CD4-positive, alpha-beta T cell (primary cell): ENCODE measurements at regions of chr5 and their contacts with region 1.

Region 1: DNA sequence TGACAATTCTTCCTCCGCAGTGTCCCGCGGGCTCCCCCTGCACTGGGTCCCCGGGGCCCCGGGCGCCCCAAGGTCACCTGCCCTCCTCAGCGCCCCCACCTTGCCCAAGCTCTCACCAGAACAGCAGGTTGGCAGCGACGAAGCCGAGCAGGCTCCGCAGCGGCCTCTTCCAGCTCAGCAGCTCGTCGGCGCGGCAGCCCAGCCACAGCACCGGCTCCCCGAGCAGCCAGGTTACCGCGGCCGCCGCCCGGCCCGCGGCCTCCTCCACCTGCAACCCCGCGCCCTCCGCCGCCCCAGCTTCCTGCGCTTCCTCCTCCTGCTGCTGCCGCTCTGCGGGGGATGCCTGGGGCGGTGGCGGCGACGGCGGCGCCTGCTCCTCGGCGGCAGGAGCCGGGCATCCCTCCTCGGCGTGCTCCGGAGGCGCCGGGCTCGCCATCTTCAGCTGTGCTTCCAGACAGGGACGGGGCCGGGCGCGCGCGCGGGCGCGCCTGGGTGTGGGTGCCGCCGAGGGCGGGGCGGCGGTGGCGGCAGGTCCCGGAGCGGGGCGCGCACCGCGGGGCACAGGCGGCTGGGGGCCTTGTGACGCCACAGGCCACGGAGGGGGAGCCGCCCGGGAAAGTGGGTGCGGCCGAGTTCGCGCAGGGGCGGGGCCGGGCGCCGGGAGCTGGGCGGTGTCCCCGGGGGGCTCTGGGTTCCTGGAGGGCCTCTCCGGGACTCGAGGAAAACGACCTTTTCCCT is at the start of gene RETREG1:
- DNase-seq: peak; percentile 70 to 94 (median 87)
- ATAC-seq: peak; percentile 70
- H3K4me3 ChIP-seq: peak within 1 kb of the TSS; percentile 93
- H3K4me3 Mint-ChIP-seq: peak within 1 kb of the TSS; percentile 99
- H3K27ac ChIP-seq: peak within 1 kb of the TSS; percentile 94 to 95
- H3K27ac Mint-ChIP-seq: no peak within 1 kb of the TSS
- H3K4me1 ChIP-seq: peaks cover 37% of the 10 kb centered on the region
- H3K4me1 Mint-ChIP-seq: peaks cover 53% of the 10 kb centered on the region
- H3K27me3 ChIP-seq: no peaks in the 10 kb centered on the region
- H3K27me3 Mint-ChIP-seq: no peaks in the 10 kb centered on the region
- CTCF ChIP-seq: no peak
- total RNA-seq, gene RETREG1: 68.9 to 69.7 TPM

Region 2: DNA sequence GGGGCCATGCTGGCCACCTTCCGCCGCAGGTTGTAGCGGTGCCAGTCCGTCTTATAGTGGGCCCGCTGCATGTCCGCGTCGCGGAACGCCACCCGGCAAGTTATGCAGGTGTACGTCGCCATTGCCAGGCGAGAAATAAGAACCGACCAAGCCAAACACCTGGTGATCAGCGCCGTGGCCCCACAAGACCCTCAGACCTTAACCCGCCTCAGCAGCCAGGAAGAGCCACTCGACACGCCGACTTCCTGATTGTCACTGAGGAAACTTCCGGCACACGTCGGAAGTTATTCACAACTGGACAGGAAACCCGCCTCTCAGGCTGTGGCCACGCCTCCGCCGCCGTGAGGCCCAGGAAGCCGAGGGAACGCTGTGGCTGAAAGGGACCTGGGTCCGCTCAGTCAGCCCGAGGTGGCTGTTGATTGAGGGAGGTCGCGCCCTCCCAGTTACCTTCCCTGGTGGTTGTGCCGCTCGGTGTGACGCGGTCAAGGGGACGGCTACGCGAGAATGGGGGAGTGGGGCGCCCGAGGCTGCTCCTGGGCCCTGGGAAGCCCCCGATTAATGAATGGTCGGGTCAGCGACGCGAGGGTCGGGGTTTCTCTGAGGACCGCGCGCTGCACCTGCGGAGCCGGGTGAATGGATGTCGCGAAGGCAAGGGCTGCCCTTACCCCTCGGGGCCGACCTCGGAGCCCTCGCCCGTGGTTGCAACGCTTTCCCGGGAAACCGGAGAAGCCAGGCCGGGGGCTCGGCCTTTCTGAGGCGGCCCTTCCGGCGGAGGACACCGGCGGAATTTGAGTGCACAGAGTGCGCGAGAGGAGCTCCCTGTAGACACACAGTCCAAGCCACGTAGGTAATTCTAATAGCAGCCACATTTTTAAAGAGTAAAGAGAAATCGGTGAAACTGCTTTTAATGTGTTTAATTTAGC is 150.9 kb before region 1 on chr5 and contains the start of gene ZNF622:
- CTCF ChIA-PET with region 1: no interaction called
- POLR2A ChIA-PET with region 1: interaction called, 4 read pairs
- intact Hi-C with region 1: loop called (anchors 5 kb)
- DNase-seq: peak; percentile 76 to 95 (median 85)
- ATAC-seq: peak; percentile 93
- H3K4me3 ChIP-seq: peak within 1 kb of the TSS; percentile 82
- H3K4me3 Mint-ChIP-seq: peak within 1 kb of the TSS; percentile 98
- H3K27ac ChIP-seq: peak within 1 kb of the TSS; percentile 63 to 79
- H3K27ac Mint-ChIP-seq: peak within 1 kb of the TSS; percentile 95
- H3K4me1 ChIP-seq: peaks cover 53% of the 10 kb centered on the region
- H3K4me1 Mint-ChIP-seq: peaks cover 96% of the 10 kb centered on the region
- H3K27me3 ChIP-seq: no peaks in the 10 kb centered on the region
- H3K27me3 Mint-ChIP-seq: no peaks in the 10 kb centered on the region
- CTCF ChIP-seq: no peak
- total RNA-seq, gene ZNF622: 52.5 to 54.1 TPM

Region 3: DNA sequence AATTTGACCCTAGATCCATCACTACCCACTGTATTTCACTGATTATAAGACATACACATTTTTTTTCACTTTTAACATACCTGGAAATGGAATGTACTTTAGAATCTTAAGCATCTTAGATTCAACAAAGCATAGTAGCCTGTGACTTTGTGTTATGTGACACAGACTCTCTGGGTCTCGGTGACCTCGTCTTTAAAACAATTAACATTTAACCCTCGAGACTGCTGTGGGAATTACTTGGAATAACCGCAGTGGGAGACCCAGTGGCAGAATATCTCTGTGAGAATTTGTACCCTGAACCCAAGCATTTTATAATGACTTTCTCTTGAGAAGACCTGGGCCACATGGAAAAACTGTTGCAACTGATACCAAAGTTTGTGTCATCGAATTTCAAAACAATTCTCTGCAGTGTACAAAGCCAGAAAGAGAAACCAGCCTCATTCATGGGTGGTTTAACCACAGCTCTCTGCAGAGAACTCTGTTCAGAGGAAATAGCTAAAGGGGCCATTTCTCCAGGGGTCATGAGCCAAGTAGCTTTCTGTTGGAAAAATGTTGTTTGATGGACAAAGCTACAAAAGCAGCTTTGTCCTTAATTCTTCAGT is 10.1 kb after region 1 on chr5:
- CTCF ChIA-PET with region 1: interaction called, 21 read pairs
- POLR2A ChIA-PET with region 1: interaction called, 206 read pairs
- intact Hi-C with region 1: loop called in 1 of 2 experiments (anchors 1 kb)
- DNase-seq: peak in 4 of 14 experiments; percentile 32 to 60 (median 52)
- ATAC-seq: peak; percentile 46
- H3K4me3 ChIP-seq: no peak overlapping the region
- H3K4me3 Mint-ChIP-seq: peak overlapping the region; percentile 16
- H3K27ac ChIP-seq: no peak overlapping the region
- H3K27ac Mint-ChIP-seq: peak overlapping the region; percentile 93
- H3K4me1 ChIP-seq: peaks cover 50% of the 10 kb centered on the region
- H3K4me1 Mint-ChIP-seq: peaks cover 43% of the 10 kb centered on the region
- H3K27me3 ChIP-seq: no peaks in the 10 kb centered on the region
- H3K27me3 Mint-ChIP-seq: no peaks in the 10 kb centered on the region
- CTCF ChIP-seq: no peak

Region 4: DNA sequence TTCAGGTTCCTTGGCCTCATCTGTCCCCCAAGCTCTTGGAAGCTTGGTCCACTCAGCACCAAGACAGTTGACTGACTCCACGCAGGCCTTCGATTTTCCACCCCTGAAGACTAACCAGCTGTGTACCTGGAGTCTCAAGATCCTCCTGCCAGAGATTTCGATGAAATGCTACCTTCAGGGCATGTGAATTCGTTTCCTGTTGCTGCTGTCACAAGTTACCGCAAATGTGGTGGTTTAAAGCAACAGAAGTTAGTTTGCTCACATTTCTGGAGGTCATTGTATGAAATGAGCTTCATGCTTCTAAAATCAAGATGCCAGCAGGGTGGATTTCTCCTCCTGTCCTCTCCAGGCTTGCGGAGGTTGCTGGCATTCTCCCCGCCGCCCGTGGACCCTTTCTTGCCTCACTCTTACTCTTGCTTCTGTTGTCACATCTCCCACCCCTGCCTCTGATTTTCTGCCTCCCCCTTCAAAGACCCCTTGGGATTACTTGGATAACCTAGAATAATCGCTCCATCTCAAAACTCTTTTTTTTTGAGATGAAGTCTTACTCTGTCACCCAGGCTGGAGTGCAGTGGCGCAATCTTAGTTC is 27.7 kb after region 1 on chr5:
- CTCF ChIA-PET with region 1: no interaction called
- POLR2A ChIA-PET with region 1: interaction called, 16 read pairs
- intact Hi-C with region 1: no loop called
- DNase-seq: peak in 3 of 14 experiments; percentile 13 to 30 (median 18)
- ATAC-seq: peak; percentile 77
- H3K4me3 ChIP-seq: no peak overlapping the region
- H3K4me3 Mint-ChIP-seq: peak overlapping the region; percentile 54
- H3K27ac ChIP-seq: no peak overlapping the region
- H3K27ac Mint-ChIP-seq: peak overlapping the region; percentile 81
- H3K4me1 ChIP-seq: peaks cover 11% of the 10 kb centered on the region
- H3K4me1 Mint-ChIP-seq: peaks cover 13% of the 10 kb centered on the region
- H3K27me3 ChIP-seq: no peaks in the 10 kb centered on the region
- H3K27me3 Mint-ChIP-seq: no peaks in the 10 kb centered on the region
- CTCF ChIP-seq: no peak

Region 5: GRCh38 chr5:16666883-16667398 is 50.2 kb after region 1 on chr5:
- CTCF ChIA-PET with region 1: interaction called, 4 read pairs
- POLR2A ChIA-PET with region 1: interaction called, 24 read pairs
- intact Hi-C with region 1: loop called (anchors 2 to 5 kb)
- DNase-seq: peak in 12 of 14 experiments; percentile 9 to 63 (median 37)
- ATAC-seq: peak; percentile 41
- H3K4me3 ChIP-seq: no peak overlapping the region
- H3K4me3 Mint-ChIP-seq: no peak overlapping the region
- H3K27ac ChIP-seq: no peak overlapping the region
- H3K27ac Mint-ChIP-seq: no peak overlapping the region
- H3K4me1 ChIP-seq: peaks cover 7% of the 10 kb centered on the region
- H3K4me1 Mint-ChIP-seq: peaks cover 29% of the 10 kb centered on the region
- H3K27me3 ChIP-seq: no peaks in the 10 kb centered on the region
- H3K27me3 Mint-ChIP-seq: no peaks in the 10 kb centered on the region
- CTCF ChIP-seq: peak; percentile 78

Region 6: GRCh38 chr5:16673241-16674201 is 56.8 kb after region 1 on chr5:
- CTCF ChIA-PET with region 1: no interaction called
- POLR2A ChIA-PET with region 1: interaction called, 24 read pairs
- intact Hi-C with region 1: loop called in 1 of 2 experiments (anchors 5 kb)
- DNase-seq: peak; percentile 18 to 76 (median 54)
- ATAC-seq: peak; percentile 82
- H3K4me3 ChIP-seq: peak overlapping the region; percentile 29
- H3K4me3 Mint-ChIP-seq: peak overlapping the region; percentile 38
- H3K27ac ChIP-seq: peak overlapping the region in 1 of 2 donors; percentile 17
- H3K27ac Mint-ChIP-seq: peak overlapping the region; percentile 70
- H3K4me1 ChIP-seq: peaks cover 14% of the 10 kb centered on the region
- H3K4me1 Mint-ChIP-seq: peaks cover 27% of the 10 kb centered on the region
- H3K27me3 ChIP-seq: no peaks in the 10 kb centered on the region
- H3K27me3 Mint-ChIP-seq: no peaks in the 10 kb centered on the region
- CTCF ChIP-seq: no peak

Region 7: GRCh38 chr5:16707168-16707868 is 90.6 kb after region 1 on chr5:
- CTCF ChIA-PET with region 1: no interaction called
- POLR2A ChIA-PET with region 1: no interaction called
- intact Hi-C with region 1: no loop called
- DNase-seq: no peak
- ATAC-seq: no peak
- H3K4me3 ChIP-seq: no peak overlapping the region
- H3K4me3 Mint-ChIP-seq: no peak overlapping the region
- H3K27ac ChIP-seq: no peak overlapping the region
- H3K27ac Mint-ChIP-seq: no peak overlapping the region
- H3K4me1 ChIP-seq: no peaks in the 10 kb centered on the region
- H3K4me1 Mint-ChIP-seq: no peaks in the 10 kb centered on the region
- H3K27me3 ChIP-seq: peaks cover 0 to 4% of the 10 kb centered on the region in 2 experiments
- H3K27me3 Mint-ChIP-seq: peaks cover 15% of the 10 kb centered on the region
- CTCF ChIP-seq: no peak

Region 8: DNA sequence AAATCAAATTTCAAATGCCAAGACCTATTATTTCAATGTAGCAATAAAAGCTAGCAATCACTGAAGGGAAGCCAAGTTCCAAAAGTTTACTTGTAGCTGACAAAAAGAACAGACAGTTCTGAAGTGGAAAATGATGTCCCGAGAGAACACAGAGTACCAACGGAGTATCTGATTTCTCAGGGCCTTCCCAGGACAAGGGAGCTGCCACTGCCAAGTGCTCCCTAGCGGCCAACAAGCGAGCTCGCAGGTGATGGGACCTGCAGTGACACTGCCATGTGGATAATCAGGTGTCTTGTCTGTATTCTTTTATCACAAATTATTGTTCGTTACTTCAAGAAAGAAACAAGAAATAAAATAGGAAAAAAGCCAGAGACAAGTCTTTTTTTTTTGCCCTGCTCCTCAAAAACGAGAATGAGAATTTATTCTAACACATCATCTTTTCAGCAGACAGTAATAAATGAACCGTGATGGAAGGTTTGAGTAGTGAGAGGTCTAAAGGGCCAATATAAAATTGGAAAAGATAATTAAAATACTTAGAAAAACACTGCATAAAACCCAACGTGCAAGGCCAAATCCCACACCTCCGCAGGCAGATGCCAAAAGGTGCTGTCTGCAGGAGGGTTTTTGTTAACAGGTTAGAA is 160.0 kb after region 1 on chr5:
- CTCF ChIA-PET with region 1: no interaction called
- POLR2A ChIA-PET with region 1: no interaction called
- intact Hi-C with region 1: no loop called
- DNase-seq: no peak
- ATAC-seq: no peak
- H3K4me3 ChIP-seq: no peak overlapping the region
- H3K4me3 Mint-ChIP-seq: no peak overlapping the region
- H3K27ac ChIP-seq: no peak overlapping the region
- H3K27ac Mint-ChIP-seq: no peak overlapping the region
- H3K4me1 ChIP-seq: no peaks in the 10 kb centered on the region
- H3K4me1 Mint-ChIP-seq: no peaks in the 10 kb centered on the region
- H3K27me3 ChIP-seq: no peaks in the 10 kb centered on the region
- H3K27me3 Mint-ChIP-seq: no peaks in the 10 kb centered on the region
- CTCF ChIP-seq: peak; percentile 22